ENCODE measurements at regions of chr19 and their contacts with region 1.

Region 1: GRCh38 chr19:43668406-43669158 is 1.4 kb downstream of the PLAUR start:
- DNase-seq: peak; percentile 98
- H3K4me3 Mint-ChIP-seq: peak overlapping the region; percentile 91
- H3K27ac Mint-ChIP-seq: peak overlapping the region; percentile 86
- H3K4me1 Mint-ChIP-seq: peaks cover 40% of the 10 kb centered on the region
- H3K27me3 Mint-ChIP-seq: peaks cover 7% of the 10 kb centered on the region

Region 2: GRCh38 chr19:43463381-43464136 is 205.0 kb before region 1 on chr19:
- intact Hi-C with region 1: loop called (anchors 1 kb)
- DNase-seq: peak; percentile 99
- H3K4me3 Mint-ChIP-seq: peak overlapping the region; percentile 92
- H3K27ac Mint-ChIP-seq: peak overlapping the region; percentile 93
- H3K4me1 Mint-ChIP-seq: peaks cover 40% of the 10 kb centered on the region
- H3K27me3 Mint-ChIP-seq: no peaks in the 10 kb centered on the region

Region 3: DNA sequence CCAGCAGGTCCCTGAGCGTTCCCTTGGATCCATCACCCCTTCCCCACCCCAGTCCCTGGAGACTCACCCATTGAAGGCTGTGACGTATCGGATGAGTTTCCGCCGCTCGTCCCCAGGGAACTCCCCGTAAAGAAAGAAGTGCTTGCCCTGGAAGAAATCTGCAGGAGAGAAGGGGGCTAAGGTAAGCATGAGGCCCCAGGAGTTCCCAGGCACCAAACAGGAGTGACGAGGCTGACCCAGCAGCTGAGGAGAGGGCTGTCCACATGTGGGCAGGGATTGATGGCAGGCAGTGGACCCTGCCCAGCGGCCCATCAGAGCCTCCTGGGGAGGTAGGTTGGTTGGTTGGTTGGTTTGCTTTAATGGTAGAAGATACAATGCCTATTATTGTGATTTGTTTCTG is 124.5 kb before region 1 on chr19:
- intact Hi-C with region 1: no loop called
- DNase-seq: no peak
- H3K4me3 Mint-ChIP-seq: no peak overlapping the region
- H3K27ac Mint-ChIP-seq: no peak overlapping the region
- H3K4me1 Mint-ChIP-seq: no peaks in the 10 kb centered on the region
- H3K27me3 Mint-ChIP-seq: no peaks in the 10 kb centered on the region

Region 4: DNA sequence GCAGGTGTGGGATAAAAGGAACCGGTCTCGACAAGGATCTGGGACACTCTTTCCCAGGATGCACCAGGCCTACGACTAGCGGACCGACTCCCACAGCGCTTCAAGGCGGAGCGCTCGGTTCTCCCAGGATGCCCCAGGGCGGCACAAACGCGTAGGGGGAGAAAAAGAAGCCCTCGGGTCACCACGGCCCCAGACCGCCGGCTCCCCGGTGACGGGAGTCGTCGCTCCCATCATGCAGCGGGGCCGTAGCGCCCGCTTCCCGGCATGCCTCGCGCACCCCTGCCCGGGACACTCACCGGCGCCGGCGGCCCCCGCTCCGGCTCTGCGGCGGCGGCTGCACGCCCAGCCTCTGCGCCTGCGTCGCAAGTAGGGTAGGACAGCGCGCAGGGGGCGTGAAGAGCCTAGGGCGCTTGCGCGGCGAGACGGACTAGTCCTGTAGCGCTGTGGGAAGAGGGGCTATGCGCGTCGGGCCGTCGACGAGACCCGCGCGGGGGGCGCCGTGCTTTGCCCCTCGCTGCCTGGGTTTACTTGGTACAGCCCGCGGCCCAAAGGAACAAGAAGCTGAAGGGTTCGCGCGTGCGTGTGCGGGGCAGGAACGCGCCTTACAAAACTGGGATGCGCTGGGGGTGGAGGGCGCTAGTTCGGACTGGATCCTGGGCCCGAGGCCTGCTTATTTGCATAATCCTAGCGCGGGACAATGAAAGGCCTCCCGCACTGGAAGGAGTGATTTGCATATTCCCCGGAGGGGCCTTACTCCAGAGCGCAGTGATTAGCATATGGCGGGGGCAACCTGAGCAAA is 49.1 kb before region 1 on chr19 and contains the start of gene ZNF428:
- intact Hi-C with region 1: loop called (anchors 1 kb)
- DNase-seq: peak; percentile 96
- H3K4me3 Mint-ChIP-seq: peak within 1 kb of the TSS; percentile 98
- H3K27ac Mint-ChIP-seq: peak within 1 kb of the TSS; percentile 99
- H3K4me1 Mint-ChIP-seq: peaks cover 23% of the 10 kb centered on the region
- H3K27me3 Mint-ChIP-seq: no peaks in the 10 kb centered on the region
- total RNA-seq, gene ZNF428: 18.1 and 19.4 TPM in 2 replicates

Region 5: DNA sequence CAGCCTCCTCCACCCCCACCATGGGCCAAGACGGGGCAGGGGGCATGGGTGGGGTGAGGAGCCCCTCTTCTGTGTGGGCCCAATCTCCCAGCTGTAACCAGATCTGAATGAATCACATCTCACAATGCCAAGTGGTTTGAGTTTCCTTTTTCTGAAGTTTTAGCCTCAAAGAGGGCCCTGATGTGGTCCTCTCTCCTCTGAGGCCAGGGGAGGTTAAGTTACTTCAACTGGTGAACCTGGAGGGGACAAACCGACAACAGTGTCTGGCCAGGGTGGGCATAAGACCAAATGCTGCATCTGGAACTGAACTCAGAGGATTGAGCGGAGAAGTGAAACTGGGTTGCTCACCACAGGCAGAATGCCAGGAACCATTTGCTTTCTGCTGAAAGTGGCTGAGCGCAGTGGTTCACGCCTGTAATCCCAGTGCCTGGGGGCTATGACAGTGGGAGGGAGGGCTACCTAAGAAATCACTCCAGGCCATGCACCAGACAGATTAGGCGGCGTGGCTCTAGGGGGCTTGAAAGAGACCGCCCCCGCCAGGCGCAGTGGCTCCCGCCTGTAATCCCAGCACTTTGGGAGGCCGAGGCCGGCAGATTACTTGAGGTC is 31.9 kb after region 1 on chr19:
- intact Hi-C with region 1: loop called (anchors 2 kb)
- DNase-seq: peak; percentile 61
- H3K4me3 Mint-ChIP-seq: peak overlapping the region; percentile 81
- H3K27ac Mint-ChIP-seq: peak overlapping the region; percentile 81
- H3K4me1 Mint-ChIP-seq: peaks cover 18% of the 10 kb centered on the region
- H3K27me3 Mint-ChIP-seq: peaks cover 13% of the 10 kb centered on the region

Region 6: DNA sequence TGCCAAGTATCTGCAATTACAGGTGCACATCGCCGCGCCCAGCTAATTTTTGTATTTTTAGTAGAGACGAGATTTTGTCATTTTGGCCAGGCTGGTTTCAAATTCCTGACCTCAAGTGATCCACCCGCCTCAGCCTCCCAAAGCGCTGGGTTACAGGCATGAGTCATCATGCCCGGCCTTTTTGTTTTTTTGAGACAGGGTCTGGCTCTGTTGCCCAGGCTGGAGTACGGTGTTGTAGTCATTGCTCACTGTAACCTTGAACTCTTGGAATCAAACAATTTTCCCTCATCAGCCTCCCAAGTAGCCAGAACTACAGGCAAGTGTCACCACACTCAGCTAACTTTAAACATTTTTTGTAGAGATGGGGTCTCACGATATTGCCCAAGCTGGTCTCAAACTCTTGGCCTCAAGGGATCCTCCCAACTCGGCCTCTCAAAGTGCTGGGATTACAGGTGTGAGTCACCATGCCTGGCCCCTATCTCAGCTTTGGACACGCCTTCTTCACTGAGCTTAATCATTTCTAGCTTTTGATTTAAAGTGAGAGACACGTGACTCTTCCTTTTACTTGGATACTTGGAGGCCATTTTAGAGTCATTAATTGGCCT is 43.3 kb after region 1 on chr19:
- intact Hi-C with region 1: no loop called
- DNase-seq: no peak
- H3K4me3 Mint-ChIP-seq: no peak overlapping the region
- H3K27ac Mint-ChIP-seq: peak overlapping the region; percentile 1
- H3K4me1 Mint-ChIP-seq: peaks cover 2% of the 10 kb centered on the region
- H3K27me3 Mint-ChIP-seq: peaks cover 6% of the 10 kb centered on the region

Region 7: DNA sequence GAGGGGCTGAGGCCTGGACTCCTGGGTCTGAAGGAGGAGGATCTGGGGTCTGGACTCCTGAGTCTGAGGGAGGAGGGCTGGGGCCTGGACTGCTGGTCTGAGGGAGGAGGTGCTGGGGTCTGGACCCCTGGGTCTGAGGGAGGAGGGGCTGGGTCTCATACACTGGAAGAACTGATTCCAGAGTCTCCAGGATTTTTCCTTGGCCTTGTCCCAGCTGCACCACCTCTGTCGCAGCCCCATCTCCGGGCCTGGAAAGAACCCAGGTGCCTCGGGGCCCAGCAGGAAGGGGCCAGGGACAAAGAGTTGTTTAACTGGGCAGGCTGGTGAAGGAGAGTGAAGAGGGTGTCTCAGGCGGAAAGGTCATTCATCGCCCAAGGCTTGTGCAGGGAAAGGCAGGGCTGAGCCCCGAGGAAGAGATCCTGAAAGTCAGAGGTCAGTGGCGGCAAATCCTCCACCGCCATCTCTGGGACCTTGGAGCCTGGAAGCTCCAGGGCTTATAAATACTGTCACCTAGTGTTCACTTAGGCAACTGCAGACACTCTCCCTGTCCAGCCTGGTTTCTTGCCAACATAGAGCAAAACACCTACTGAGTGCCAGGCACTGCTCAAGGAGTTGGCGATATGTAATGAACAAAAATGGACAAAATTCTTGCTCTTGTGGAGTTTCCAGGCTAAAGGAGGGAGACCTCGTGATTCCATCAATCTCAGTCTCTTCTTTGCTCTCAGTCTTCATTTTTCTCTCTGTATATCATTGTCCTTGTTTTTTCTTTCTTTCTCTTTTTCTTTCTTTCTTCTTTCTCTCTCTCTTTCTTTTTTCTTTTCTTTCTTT is 116.6 kb after region 1 on chr19:
- intact Hi-C with region 1: loop called (anchors 2 kb)
- DNase-seq: peak; percentile 89
- H3K4me3 Mint-ChIP-seq: peak overlapping the region; percentile 75
- H3K27ac Mint-ChIP-seq: peak overlapping the region; percentile 92
- H3K4me1 Mint-ChIP-seq: peaks cover 39% of the 10 kb centered on the region
- H3K27me3 Mint-ChIP-seq: peaks cover 4% of the 10 kb centered on the region

Measured in activated CD4-positive, alpha-beta T cell treated with anti-CD3 and anti-CD28 coated beads, Interleukin-2, amount 10 ng/mL, durations not matched to agents 24 days and 14 days (primary cell).